Left cardiac atrium (tissue), 4 donors: ENCODE measurements at regions of chr4 and their contacts with region 1.

Region 1: GRCh38 chr4:185096032-185096653 is 46.9 kb upstream of the SLC25A4 start:
- DNase-seq: no peak
- ATAC-seq: peak in 1 of 2 donors; percentile 43

Region 2: DNA sequence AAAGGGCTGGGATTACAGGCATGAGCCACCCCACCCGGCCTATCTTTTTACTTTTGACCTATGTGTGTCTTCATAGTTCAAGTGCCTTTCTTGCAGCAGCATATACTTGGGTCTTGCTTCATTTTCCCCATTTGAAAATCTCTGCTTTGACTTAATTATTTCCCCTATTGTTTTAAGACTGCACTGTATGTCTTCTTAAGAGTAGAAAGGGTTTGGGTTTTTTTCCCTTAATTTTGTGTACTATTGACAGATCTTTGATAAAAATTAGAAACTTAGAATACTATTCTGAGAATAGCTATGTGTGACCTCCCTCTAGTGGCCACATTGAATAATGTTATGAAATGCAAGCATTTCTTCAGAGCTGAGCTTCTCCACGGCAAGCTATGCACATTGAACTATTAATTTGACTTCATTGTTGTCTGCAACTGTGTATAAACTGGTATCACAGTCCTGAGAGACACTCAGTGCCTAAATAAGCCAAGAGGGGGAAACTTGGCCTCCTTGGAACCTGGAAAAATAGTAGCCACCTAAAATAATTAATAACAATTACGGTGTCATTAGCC is 38.2 kb after region 1 on chr4:
- intact Hi-C with region 1: loop called in 1 of 2 experiments (anchors 5 kb)
- DNase-seq: no peak
- ATAC-seq: peak; percentile 54 to 68

Region 3: DNA sequence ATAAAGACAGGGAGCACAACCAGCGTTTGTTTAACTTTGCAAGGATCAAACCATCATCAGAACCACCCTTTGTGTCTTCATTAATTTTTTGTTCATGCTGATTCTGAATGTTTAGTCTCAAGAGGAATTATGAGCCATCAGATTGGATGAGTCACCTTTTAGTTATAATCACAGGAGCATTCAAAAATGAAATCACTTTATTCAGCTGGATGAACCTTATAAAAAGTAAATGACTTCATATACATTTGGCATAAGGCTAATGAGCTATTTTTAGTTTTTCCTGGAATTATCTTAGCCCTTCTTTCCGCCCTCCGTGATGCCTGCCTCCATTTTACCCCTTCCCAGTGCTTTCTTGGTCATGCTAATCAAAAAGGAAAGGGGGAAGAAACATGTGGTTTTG is 612.2 kb after region 1 on chr4:
- intact Hi-C with region 1: no loop called
- DNase-seq: no peak
- ATAC-seq: no peak